ENCODE measurements at regions of chr3 and their contacts with region 1.

Region 1: GRCh38 chr3:66378256-66378823 is 122.5 kb downstream of the LRIG1 start:
- DNase-seq: no peak
- H3K4me3 Mint-ChIP-seq: no peak overlapping the region
- H3K27ac Mint-ChIP-seq: peak overlapping the region; percentile 70
- H3K4me1 Mint-ChIP-seq: peaks cover 14% of the 10 kb centered on the region
- H3K27me3 Mint-ChIP-seq: no peaks in the 10 kb centered on the region

Region 2: DNA sequence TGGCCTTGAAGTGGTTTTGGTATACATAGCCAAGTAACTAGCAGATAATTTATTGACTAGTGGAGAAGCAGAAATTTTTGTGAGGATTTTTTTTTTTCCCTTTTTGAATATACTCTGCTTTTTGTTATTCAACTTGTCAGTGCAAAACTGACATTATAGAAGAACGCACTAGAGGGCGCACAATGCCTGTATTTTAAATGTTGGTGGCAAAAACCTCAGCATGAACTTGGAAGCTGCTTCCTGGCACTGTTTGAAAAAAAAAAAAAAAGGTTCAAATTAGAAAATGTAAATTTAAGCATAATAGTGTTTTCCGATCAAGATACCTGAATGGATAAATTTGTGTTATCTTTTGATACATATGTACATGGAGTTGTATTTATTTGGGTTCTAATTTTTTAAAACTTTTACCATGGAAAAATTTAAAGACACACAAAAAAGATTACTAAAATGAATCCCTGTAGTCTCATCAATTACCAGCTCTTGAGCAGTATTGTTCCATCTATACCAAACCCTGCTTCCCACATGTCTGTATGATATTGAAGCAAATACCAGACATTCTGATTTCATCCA is 101.5 kb before region 1 on chr3:
- CTCF ChIA-PET with region 1: interaction called, 17 read pairs
- DNase-seq: peak; percentile 75
- H3K4me3 Mint-ChIP-seq: no peak overlapping the region
- H3K27ac Mint-ChIP-seq: no peak overlapping the region
- H3K4me1 Mint-ChIP-seq: peaks cover 25% of the 10 kb centered on the region
- H3K27me3 Mint-ChIP-seq: no peaks in the 10 kb centered on the region

Region 3: GRCh38 chr3:66348704-66349103 is 29.6 kb before region 1 on chr3:
- CTCF ChIA-PET with region 1: no interaction called
- DNase-seq: no peak
- H3K4me3 Mint-ChIP-seq: no peak overlapping the region
- H3K27ac Mint-ChIP-seq: no peak overlapping the region
- H3K4me1 Mint-ChIP-seq: no peaks in the 10 kb centered on the region
- H3K27me3 Mint-ChIP-seq: no peaks in the 10 kb centered on the region

Region 4: DNA sequence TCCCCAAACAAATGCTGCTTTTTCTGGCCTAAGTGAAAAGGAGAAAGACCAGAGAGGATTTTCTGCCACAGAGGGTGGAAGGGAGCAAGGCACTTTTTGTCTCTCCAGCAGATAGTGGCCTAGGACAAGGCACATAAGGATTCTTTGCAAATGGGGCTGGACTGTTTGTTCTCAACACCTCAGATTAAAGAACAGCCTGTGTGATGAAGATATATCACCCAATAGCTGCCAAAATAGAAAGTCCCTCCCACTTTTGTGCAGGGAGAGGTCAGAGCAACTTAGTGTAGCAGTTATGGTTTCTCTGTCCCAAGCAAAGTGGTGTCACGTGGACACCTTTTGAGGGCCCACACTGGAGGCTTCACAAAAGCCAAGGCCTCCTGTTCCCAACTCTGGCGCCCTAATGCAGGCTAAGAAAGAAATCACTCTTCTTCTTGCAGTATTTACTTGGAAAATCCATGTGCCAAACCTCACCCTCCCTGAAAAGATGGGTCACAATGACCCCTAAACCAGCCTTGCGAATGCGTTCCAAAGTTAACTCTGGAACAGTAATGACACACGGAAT is 37.6 kb after region 1 on chr3:
- CTCF ChIA-PET with region 1: no interaction called
- DNase-seq: no peak
- H3K4me3 Mint-ChIP-seq: no peak overlapping the region
- H3K27ac Mint-ChIP-seq: peak overlapping the region; percentile 50
- H3K4me1 Mint-ChIP-seq: peaks cover 5% of the 10 kb centered on the region
- H3K27me3 Mint-ChIP-seq: no peaks in the 10 kb centered on the region

Region 5: DNA sequence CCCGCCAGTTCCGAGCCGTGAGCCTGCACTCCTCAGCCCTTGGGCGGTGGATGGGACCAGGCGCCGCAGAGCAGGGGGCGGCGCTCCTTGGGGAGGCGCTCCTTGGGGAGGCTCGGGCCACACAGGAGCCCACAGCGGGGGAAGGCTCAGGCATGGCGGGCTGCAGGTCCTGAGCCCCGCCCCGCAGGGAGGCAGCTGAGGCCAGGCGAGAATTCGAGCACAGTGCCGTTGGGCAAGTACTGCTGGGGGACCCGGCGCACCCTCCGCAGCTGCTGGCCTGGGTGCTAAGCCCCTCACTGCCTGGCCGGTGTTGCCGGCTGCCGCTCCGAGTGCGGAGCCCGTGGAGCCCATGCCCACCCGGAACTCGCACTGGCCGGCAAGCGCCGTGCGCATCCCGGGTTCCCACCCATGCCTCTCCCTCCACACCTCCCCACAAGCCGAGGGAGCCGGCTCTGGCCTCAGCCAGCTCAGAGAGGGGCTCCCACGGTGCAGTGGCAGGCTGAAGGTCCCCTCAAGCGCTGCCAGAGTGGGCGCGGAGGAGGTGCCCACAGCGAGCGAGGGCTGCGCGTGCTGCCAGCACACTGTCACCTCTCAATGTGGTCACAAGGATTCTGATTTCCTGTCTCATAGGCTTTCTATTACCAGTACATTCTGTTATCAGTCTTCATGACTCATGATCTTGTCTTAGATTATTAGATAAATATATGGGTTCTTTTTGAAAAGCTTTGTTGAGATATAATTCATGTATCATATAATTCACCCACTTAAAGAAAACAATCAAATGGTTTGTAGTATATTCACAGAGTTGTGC is 166.5 kb after region 1 on chr3:
- CTCF ChIA-PET with region 1: no interaction called
- DNase-seq: no peak
- H3K4me3 Mint-ChIP-seq: no peak overlapping the region
- H3K27ac Mint-ChIP-seq: no peak overlapping the region
- H3K4me1 Mint-ChIP-seq: no peaks in the 10 kb centered on the region
- H3K27me3 Mint-ChIP-seq: peaks cover 3% of the 10 kb centered on the region

Region 6: GRCh38 chr3:66803206-66803605 is 424.9 kb after region 1 on chr3:
- CTCF ChIA-PET with region 1: no interaction called
- DNase-seq: no peak
- H3K4me3 Mint-ChIP-seq: no peak overlapping the region
- H3K27ac Mint-ChIP-seq: no peak overlapping the region
- H3K4me1 Mint-ChIP-seq: peaks cover 4% of the 10 kb centered on the region
- H3K27me3 Mint-ChIP-seq: peaks cover 12% of the 10 kb centered on the region

Measured in activated naive CD4-positive, alpha-beta T cell treated with anti-CD3 and anti-CD28 coated beads, Interleukin-2, amount 10 ng/mL, durations not matched to agents 7 days and 5 days (primary cell).